ENCODE measurements at regions of chr9 and their contacts with region 1.

Region 1: GRCh38 chr9:109320742-109321448 is at the start of gene EPB41L4B:
- DNase-seq: peak; percentile 63 to 94 (median 81)
- ATAC-seq: peak; percentile 97
- H3K4me3 ChIP-seq: no peak within 1 kb of the TSS
- H3K4me3 Mint-ChIP-seq: peak within 1 kb of the TSS; percentile 68 to 93 (median 83)
- H3K27ac ChIP-seq: no peak within 1 kb of the TSS
- H3K27ac Mint-ChIP-seq: no peak within 1 kb of the TSS
- H3K4me1 ChIP-seq: peaks cover 0 to 10% of the 10 kb centered on the region in 2 donors
- H3K4me1 Mint-ChIP-seq: peaks cover 5 to 12% (median 10%) of the 10 kb centered on the region in 7 donors
- H3K27me3 ChIP-seq: peaks cover 3 to 4% of the 10 kb centered on the region in 2 donors
- H3K27me3 Mint-ChIP-seq: peaks cover 58 to 77% (median 67%) of the 10 kb centered on the region in 5 donors
- total RNA-seq, gene EPB41L4B: 0.36 TPM in 1 of 5 experiments, not detected in the others

Region 2: DNA sequence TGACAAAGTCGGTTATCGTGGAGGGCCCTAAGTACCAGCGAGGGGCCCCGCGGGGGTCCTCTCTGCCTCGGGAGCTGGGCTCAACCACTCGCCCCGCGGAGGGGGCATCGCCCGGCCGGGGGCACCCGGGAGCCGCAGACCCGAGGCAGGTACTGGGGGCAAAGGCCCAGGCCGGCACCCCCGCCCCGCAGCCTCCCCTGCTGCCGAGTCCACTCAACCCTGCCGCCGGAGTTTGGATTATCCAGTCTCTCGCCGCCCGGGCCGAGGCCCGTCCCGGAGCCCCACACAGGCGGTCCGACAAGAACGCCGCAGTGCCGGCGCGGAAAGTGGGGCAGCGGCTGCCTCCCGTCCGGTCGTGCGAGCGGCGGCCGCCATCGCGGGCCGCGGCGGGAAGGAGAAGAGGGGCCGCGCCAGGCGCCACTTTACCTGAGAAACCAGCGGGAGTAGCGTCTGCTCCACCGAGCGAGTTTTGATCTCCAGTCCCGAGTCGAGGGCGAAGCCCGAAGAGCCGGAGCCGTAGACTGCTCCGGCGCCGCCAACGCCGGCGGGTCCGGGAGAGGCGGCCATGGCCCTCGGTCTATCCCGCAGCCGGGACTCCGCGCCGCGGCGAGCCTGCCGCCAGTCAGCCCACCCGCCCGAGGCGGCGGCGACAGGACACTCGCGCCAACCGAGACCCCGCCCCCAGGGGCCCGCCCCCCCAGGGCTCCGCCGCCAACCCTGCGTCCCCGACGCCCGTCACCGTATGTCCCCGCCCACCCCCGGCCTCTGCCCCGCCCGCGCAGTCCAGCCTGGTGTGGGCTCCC is 307.8 kb before region 1 on chr9 and contains the start of gene CTNNAL1:
- CTCF ChIA-PET with region 1: no interaction called
- POLR2A ChIA-PET with region 1: no interaction called
- intact Hi-C with region 1: loop called in 1 of 2 experiments (anchors 1 kb)
- DNase-seq: peak; percentile 68 to 88 (median 78)
- ATAC-seq: peak; percentile 98
- H3K4me3 ChIP-seq: peak within 1 kb of the TSS; percentile 72
- H3K4me3 Mint-ChIP-seq: peak within 1 kb of the TSS; percentile 93 to 99 (median 97)
- H3K27ac ChIP-seq: peak within 1 kb of the TSS; percentile 77
- H3K27ac Mint-ChIP-seq: peak within 1 kb of the TSS; percentile 79 to 95 (median 92)
- H3K4me1 ChIP-seq: peaks cover 6 to 13% of the 10 kb centered on the region in 2 donors
- H3K4me1 Mint-ChIP-seq: peaks cover 17 to 34% (median 21%) of the 10 kb centered on the region in 7 donors
- H3K27me3 ChIP-seq: no peaks in the 10 kb centered on the region
- H3K27me3 Mint-ChIP-seq: peaks cover 0 to 22% (median 4%) of the 10 kb centered on the region in 5 donors
- total RNA-seq, gene CTNNAL1: 1.1 to 9.9 (median 2.5) TPM

Region 3: GRCh38 chr9:109182940-109183798 is 137.7 kb before region 1 on chr9:
- CTCF ChIA-PET with region 1: no interaction called
- POLR2A ChIA-PET with region 1: no interaction called
- intact Hi-C with region 1: loop called in 1 of 2 experiments (anchors 5 kb)
- DNase-seq: no peak
- ATAC-seq: no peak
- H3K4me3 ChIP-seq: no peak overlapping the region
- H3K4me3 Mint-ChIP-seq: no peak overlapping the region
- H3K27ac ChIP-seq: no peak overlapping the region
- H3K27ac Mint-ChIP-seq: peak overlapping the region in 1 of 9 donors; percentile 48
- H3K4me1 ChIP-seq: no peaks in the 10 kb centered on the region
- H3K4me1 Mint-ChIP-seq: peaks cover 0 to 25% (median 20%) of the 10 kb centered on the region in 7 donors
- H3K27me3 ChIP-seq: no peaks in the 10 kb centered on the region
- H3K27me3 Mint-ChIP-seq: peaks cover 0 to 25% (median 0%) of the 10 kb centered on the region in 5 donors

Region 4: GRCh38 chr9:109411798-109412352 is 91.0 kb after region 1 on chr9:
- CTCF ChIA-PET with region 1: no interaction called
- POLR2A ChIA-PET with region 1: no interaction called
- intact Hi-C with region 1: loop called in 1 of 2 experiments (anchors 5 kb)
- DNase-seq: no peak
- ATAC-seq: no peak
- H3K4me3 ChIP-seq: no peak overlapping the region
- H3K4me3 Mint-ChIP-seq: peak overlapping the region in 1 of 10 donors; percentile 48
- H3K27ac ChIP-seq: no peak overlapping the region
- H3K27ac Mint-ChIP-seq: peak overlapping the region in 1 of 9 donors; percentile 81
- H3K4me1 ChIP-seq: no peaks in the 10 kb centered on the region
- H3K4me1 Mint-ChIP-seq: peaks cover 0 to 53% (median 0%) of the 10 kb centered on the region in 7 donors
- H3K27me3 ChIP-seq: no peaks in the 10 kb centered on the region
- H3K27me3 Mint-ChIP-seq: peaks cover 0 to 21% (median 17%) of the 10 kb centered on the region in 5 donors

Measured in naive thymus-derived CD4-positive, alpha-beta T cell (primary cell).